Esophagus squamous epithelium (tissue), 5 donors: ENCODE measurements at regions of chr19 and their contacts with region 1.

Region 1: GRCh38 chr19:34364830-34365462 is at the start of gene GPI:
- DNase-seq: no peak
- H3K4me3 ChIP-seq: peak within 1 kb of the TSS; percentile 69 to 87 (median 84)
- H3K27ac ChIP-seq: peak within 1 kb of the TSS; percentile 78 to 92 (median 88)
- H3K4me1 ChIP-seq: peaks cover 14 to 49% (median 27%) of the 10 kb centered on the region in 3 donors
- H3K27me3 ChIP-seq: no peaks in the 10 kb centered on the region
- CTCF ChIP-seq: no peak
- POLR2A ChIP-seq: peak in 1 of 4 donors; percentile 61
- total RNA-seq, gene GPI: 99.9 to 336 (median 265) TPM

Region 2: DNA sequence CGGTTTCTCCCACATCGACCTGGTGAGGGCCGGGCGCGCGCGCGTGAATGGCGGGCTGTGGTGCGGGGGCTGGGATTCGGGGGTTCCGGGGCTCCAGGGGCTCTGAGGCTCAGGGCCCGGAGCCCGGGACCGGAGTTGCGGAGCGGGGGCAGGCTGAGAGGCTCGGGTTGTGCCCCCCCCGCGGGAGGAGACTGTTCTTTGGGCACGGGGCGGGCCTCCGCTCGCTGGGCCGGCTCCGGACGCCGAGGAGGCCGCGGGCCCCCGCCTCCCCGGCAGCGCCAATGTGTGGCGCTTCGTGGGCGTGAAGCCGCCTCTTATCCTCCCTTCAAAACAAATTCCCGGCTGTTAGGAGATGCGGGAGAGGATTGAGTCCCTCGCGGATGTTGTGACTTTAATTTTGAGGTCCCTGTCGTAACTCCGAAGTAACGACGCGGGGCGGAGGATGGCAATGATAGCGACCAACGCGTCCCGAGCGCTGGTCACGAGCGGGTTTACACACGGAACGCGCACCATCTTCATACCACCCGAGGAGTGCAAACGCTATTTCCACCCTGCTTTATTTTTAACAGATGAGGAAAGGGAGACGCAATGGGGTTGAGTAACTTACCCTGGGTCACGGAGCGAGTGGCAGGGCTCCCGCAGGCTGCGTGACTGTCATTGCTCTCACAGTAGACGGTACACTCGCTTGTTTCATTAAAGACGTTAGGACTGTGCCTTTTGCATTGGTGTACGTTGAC is 63.8 kb after region 1 on chr19:
- intact Hi-C with region 1: loop called (anchors 10 kb)
- DNase-seq: no peak
- H3K4me3 ChIP-seq: peak overlapping the region; percentile 83 to 94 (median 90)
- H3K27ac ChIP-seq: peak overlapping the region; percentile 92 to 94 (median 93)
- H3K4me1 ChIP-seq: peaks cover 11 to 51% (median 21%) of the 10 kb centered on the region in 3 donors
- H3K27me3 ChIP-seq: no peaks in the 10 kb centered on the region
- CTCF ChIP-seq: no peak
- POLR2A ChIP-seq: no peak